ENCODE measurements at regions of chr13 and their contacts with region 1.

Region 1: DNA sequence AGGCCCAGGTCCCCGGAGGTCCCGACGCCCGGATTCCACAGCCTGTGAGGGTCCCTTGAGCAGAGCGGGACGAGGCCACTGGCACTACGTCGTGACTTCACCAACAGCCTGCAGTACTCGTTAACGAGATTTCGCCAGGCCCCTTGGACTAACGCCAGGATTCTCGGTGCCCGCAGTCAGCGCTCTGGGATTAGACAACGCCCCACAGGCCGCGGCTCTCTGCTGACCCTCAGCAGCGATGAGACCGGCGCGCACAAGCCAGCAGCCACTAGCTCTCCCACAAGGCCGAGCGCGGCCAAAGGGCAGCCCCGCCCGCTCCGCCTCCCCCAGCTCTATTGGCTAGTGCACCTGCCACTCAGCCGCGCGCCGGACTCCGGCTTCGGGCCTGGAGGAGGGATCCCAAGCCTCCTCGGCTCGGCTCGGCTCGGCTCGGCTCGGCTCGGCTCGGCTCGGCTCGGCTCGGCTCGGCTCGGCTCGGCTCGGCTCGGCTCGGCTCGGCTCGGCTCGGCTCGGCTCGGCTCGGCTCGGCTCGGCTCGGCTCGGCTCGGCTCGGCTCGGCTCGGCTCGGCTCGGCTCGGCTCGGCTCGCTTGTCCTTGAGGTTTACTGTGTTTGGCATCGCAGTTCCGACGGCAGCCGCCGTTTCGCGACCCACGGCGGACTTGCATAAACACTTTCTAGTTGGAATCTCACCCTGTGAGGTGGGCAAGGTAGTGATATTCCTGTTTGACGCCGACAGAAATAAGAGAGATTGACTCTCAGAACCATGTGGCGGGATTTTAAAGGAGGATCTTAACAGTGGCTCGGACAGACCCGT is 231.7 kb upstream of the SERP2 start:
- DNase-seq: peak; percentile 96
- H3K4me3 ChIP-seq: peak overlapping the region; percentile 43 to 68 (median 50)
- H3K27ac ChIP-seq: peak overlapping the region; percentile 71
- H3K4me1 ChIP-seq: peaks cover 18% of the 10 kb centered on the region
- H3K27me3 ChIP-seq: no peaks in the 10 kb centered on the region
- CTCF ChIP-seq: no peak
- POLR2A ChIP-seq: peak; percentile 79

Region 2: DNA sequence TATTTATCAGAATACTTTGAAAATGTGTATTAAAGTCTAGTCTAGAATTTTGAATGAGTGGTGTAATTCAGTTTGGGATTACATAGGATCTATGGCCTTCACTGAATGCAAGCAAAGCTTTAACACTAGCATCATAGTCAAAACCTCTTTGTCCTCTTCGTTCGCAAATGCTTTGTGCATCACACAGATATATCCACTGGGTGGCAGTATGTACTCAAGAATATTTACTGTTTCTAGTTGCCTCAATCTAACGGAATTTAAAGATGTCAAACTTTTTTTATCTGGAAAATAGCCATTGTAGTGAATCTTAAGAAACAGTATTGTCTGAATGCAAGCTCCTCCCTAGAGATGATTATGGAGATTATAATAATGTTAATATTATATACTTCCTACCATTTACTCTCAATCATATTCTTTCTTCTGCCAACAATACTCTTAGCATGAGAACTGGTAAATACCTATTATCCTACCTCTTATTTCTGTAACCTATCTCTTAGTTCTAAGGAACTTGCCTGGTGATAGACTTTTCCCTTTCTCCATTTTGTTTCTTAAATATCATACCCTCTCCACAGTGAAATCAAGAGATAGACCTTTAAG is 236.4 kb before region 1 on chr13:
- CTCF ChIA-PET with region 1: no interaction called
- POLR2A ChIA-PET with region 1: no interaction called
- dilution Hi-C with region 1: no loop called
- intact Hi-C with region 1: loop called (anchors 5 kb)
- DNase-seq: peak; percentile 68
- H3K4me3 ChIP-seq: no peak overlapping the region
- H3K27ac ChIP-seq: no peak overlapping the region
- H3K4me1 ChIP-seq: no peaks in the 10 kb centered on the region
- H3K27me3 ChIP-seq: peaks cover 0 to 6% of the 10 kb centered on the region in 2 experiments
- CTCF ChIP-seq: peak; percentile 43 to 45
- POLR2A ChIP-seq: no peak

Region 3: DNA sequence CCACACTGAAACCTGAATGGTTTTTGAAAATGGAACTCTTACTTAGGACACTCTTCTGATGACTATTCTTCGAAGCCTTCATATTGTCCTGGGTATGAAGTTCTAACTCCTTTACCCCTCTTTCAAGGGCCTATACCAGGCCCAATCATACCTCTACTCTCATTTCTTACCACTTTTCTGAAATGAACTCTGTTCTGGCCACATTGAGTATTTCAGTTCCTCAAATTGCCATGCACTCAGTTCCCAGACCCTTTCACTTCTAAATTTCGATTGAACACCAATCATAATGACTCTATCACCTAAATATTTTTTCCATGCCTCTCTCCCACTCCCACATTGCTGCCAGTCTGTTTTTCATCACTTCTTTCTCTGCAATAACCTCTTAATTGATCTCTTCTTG is 208.6 kb before region 1 on chr13:
- CTCF ChIA-PET with region 1: no interaction called
- POLR2A ChIA-PET with region 1: no interaction called
- dilution Hi-C with region 1: no loop called
- intact Hi-C with region 1: no loop called
- DNase-seq: no peak
- H3K4me3 ChIP-seq: no peak overlapping the region
- H3K27ac ChIP-seq: no peak overlapping the region
- H3K4me1 ChIP-seq: no peaks in the 10 kb centered on the region
- H3K27me3 ChIP-seq: peaks cover 15 to 17% of the 10 kb centered on the region in 2 experiments
- CTCF ChIP-seq: no peak
- POLR2A ChIP-seq: no peak

Region 4: GRCh38 chr13:44013758-44014291 is 128.1 kb before region 1 on chr13:
- CTCF ChIA-PET with region 1: no interaction called
- POLR2A ChIA-PET with region 1: no interaction called
- dilution Hi-C with region 1: no loop called
- intact Hi-C with region 1: loop called (anchors 5 kb)
- DNase-seq: peak; percentile 88
- H3K4me3 ChIP-seq: no peak overlapping the region
- H3K27ac ChIP-seq: peak overlapping the region; percentile 58
- H3K4me1 ChIP-seq: peaks cover 14% of the 10 kb centered on the region
- H3K27me3 ChIP-seq: no peaks in the 10 kb centered on the region
- CTCF ChIP-seq: no peak
- POLR2A ChIP-seq: no peak

Region 5: DNA sequence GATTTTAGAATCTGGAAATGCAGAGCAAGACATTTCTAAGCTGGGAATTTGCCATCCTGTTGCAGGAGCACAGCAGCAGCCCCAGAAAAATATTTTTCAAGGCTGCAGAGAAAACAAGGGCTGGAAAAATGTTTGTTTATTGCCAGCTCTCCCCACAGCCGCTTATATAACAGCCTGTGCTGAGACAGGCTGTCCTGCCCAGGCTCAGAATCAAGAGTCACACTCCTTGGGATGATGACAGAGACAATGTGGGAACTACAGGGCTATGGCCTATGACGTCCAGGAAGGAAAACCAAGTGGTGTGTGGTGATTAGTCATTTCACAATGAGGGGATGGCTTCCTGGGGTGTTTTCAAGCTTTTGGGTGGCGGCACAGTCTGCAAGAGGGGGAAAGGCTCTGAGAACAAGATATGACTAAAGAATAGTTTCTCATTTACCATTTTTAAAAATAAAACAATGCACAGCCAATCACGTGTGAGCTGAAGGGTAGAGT is 95.4 kb after region 1 on chr13:
- CTCF ChIA-PET with region 1: no interaction called
- POLR2A ChIA-PET with region 1: no interaction called
- dilution Hi-C with region 1: no loop called
- intact Hi-C with region 1: loop called (anchors 1 kb)
- DNase-seq: peak; percentile 97
- H3K4me3 ChIP-seq: no peak overlapping the region
- H3K27ac ChIP-seq: peak overlapping the region; percentile 84
- H3K4me1 ChIP-seq: peaks cover 21% of the 10 kb centered on the region
- H3K27me3 ChIP-seq: no peaks in the 10 kb centered on the region
- CTCF ChIP-seq: no peak
- POLR2A ChIP-seq: no peak

Region 6: DNA sequence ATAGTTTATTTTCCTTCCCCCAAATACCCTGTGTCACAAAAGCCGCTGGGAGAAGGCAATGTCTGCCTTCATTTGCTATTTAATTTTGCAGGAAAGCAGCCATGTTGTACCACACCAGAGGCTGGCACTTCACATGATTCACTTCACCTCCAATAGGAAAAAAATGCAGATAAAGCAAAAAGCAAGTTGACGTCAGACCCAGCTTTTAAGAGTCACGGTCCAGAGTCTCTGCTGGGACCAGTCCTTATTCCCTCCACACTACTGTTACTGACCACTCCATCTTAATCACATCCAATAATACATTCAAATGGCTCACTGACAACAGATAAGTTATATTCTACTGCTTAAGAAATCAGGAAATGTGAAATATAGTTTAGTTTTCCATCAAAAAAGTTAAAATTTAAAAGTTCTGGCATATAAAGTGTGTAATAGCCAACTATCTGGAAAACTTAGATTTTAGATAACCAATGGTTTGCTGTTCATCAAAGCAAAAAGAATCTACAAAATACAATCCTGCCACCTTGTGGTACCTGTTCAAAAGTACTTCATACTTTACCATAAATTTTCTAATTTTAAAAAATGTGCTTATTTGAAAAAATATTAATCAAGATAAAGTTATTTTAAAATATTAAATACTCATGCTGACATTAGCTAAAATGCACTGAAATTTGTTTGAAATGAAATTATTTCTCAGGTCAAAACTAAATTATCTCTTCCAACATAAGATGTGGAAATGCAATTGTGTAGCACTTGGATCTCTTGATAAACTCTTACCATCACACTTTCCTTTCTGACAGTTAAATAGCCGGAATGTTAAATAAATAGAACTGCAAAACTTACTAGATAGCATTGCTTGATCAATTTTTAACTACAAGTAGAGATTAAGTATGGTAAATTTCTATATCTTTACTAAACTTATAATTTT is 329.0 kb after region 1 on chr13:
- CTCF ChIA-PET with region 1: no interaction called
- POLR2A ChIA-PET with region 1: no interaction called
- dilution Hi-C with region 1: no loop called
- intact Hi-C with region 1: loop called (anchors 1 kb)
- DNase-seq: peak; percentile 46
- H3K4me3 ChIP-seq: peak overlapping the region in 1 of 3 experiments; percentile 50
- H3K27ac ChIP-seq: peak overlapping the region; percentile 51
- H3K4me1 ChIP-seq: peaks cover 29% of the 10 kb centered on the region
- H3K27me3 ChIP-seq: no peaks in the 10 kb centered on the region
- CTCF ChIP-seq: peak; percentile 6 to 20
- POLR2A ChIP-seq: no peak